ENCODE measurements at regions of chr2 and their contacts with region 1.

Region 1: GRCh38 chr2:233267516-233268245 is 16.2 kb downstream of the ATG16L1 start:
- DNase-seq: peak; percentile 92
- H3K4me3 Mint-ChIP-seq: peak overlapping the region; percentile 63
- H3K27ac Mint-ChIP-seq: peak overlapping the region; percentile 97
- H3K4me1 Mint-ChIP-seq: peaks cover 74% of the 10 kb centered on the region
- H3K27me3 Mint-ChIP-seq: no peaks in the 10 kb centered on the region

Region 2: GRCh38 chr2:233061591-233062450 is 205.9 kb before region 1 on chr2:
- CTCF ChIA-PET with region 1: interaction called, 9 read pairs
- POLR2A ChIA-PET with region 1: interaction called, 28 read pairs
- DNase-seq: peak; percentile 57
- H3K4me3 Mint-ChIP-seq: peak overlapping the region; percentile 99
- H3K27ac Mint-ChIP-seq: peak overlapping the region; percentile 84
- H3K4me1 Mint-ChIP-seq: peaks cover 60% of the 10 kb centered on the region
- H3K27me3 Mint-ChIP-seq: no peaks in the 10 kb centered on the region

Region 3: GRCh38 chr2:233251306-233252116 is 16.2 kb before region 1 on chr2 and contains the start of gene ATG16L1:
- CTCF ChIA-PET with region 1: interaction called, 29 read pairs
- POLR2A ChIA-PET with region 1: interaction called, 49 read pairs
- DNase-seq: peak; percentile 97
- H3K4me3 Mint-ChIP-seq: peak within 1 kb of the TSS; percentile 87
- H3K27ac Mint-ChIP-seq: peak within 1 kb of the TSS; percentile 95
- H3K4me1 Mint-ChIP-seq: peaks cover 73% of the 10 kb centered on the region
- H3K27me3 Mint-ChIP-seq: no peaks in the 10 kb centered on the region
- total RNA-seq, gene ATG16L1: 55.9 to 58.9 TPM

Region 4: DNA sequence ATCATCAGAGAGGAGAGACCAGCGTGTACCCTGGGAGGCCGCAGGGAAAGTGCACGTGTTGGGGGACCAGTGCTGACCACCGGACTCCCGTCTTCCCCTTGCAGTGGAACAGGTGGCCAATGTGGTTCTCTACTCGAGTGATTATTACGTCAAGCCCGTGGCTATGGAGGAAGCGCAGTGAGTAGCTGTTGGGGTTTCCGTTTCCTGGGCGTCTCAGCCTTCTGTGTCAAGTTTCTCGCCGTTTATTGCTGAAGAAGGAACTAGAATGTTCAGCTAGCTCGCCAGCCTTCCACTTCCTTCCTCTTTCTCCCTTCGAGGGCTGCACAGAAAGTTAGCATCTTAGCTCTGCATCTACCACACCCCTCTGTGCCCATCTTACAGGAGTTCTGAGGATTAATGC is 63.9 kb after region 1 on chr2:
- CTCF ChIA-PET with region 1: interaction called, 10 read pairs
- POLR2A ChIA-PET with region 1: interaction called, 19 read pairs
- DNase-seq: peak; percentile 89
- H3K4me3 Mint-ChIP-seq: peak overlapping the region; percentile 33
- H3K27ac Mint-ChIP-seq: peak overlapping the region; percentile 96
- H3K4me1 Mint-ChIP-seq: peaks cover 52% of the 10 kb centered on the region
- H3K27me3 Mint-ChIP-seq: no peaks in the 10 kb centered on the region

Region 5: GRCh38 chr2:233385489-233386044 is 117.9 kb after region 1 on chr2:
- CTCF ChIA-PET with region 1: no interaction called
- POLR2A ChIA-PET with region 1: no interaction called
- DNase-seq: no peak
- H3K4me3 Mint-ChIP-seq: peak overlapping the region; percentile 33
- H3K27ac Mint-ChIP-seq: peak overlapping the region; percentile 70
- H3K4me1 Mint-ChIP-seq: peaks cover 39% of the 10 kb centered on the region
- H3K27me3 Mint-ChIP-seq: no peaks in the 10 kb centered on the region

Region 6: GRCh38 chr2:233443468-233444183 is 175.9 kb after region 1 on chr2:
- CTCF ChIA-PET with region 1: interaction called, 12 read pairs
- POLR2A ChIA-PET with region 1: interaction called, 3 read pairs
- DNase-seq: peak; percentile 86
- H3K4me3 Mint-ChIP-seq: no peak overlapping the region
- H3K27ac Mint-ChIP-seq: peak overlapping the region; percentile 40
- H3K4me1 Mint-ChIP-seq: peaks cover 19% of the 10 kb centered on the region
- H3K27me3 Mint-ChIP-seq: no peaks in the 10 kb centered on the region

Region 7: DNA sequence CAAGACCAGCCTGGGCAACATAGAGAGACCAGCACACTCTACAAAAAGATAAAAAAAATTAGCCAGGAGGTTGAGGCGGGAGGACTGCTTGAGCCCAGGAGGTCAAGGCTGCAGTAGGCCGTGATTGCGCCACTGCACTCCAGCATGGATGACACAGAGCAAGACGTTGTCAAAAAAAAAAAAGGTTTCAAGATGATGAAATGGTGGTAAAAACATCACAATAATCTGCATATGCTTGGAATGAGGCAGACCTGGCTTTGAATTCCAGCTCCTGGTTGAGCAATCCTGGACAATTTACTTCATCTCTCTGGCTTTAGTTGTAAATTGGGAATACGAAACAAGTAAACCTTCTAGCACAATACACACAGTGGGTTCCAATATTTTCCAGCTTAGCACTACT is 274.8 kb after region 1 on chr2:
- CTCF ChIA-PET with region 1: no interaction called
- POLR2A ChIA-PET with region 1: no interaction called
- DNase-seq: no peak
- H3K4me3 Mint-ChIP-seq: no peak overlapping the region
- H3K27ac Mint-ChIP-seq: no peak overlapping the region
- H3K4me1 Mint-ChIP-seq: peaks cover 10% of the 10 kb centered on the region
- H3K27me3 Mint-ChIP-seq: no peaks in the 10 kb centered on the region